ENCODE measurements at regions of chr1 and their contacts with region 1.

Region 1: GRCh38 chr1:200488375-200489165 is 78.7 kb upstream of the ZNF281 start:
- DNase-seq: peak in 8 of 9 experiments; percentile 8 to 66 (median 42)
- ATAC-seq: peak; percentile 56
- H3K4me3 ChIP-seq: no peak overlapping the region
- H3K4me3 Mint-ChIP-seq: no peak overlapping the region
- H3K27ac ChIP-seq: no peak overlapping the region
- H3K27ac Mint-ChIP-seq: no peak overlapping the region
- H3K4me1 ChIP-seq: no peaks in the 10 kb centered on the region
- H3K4me1 Mint-ChIP-seq: no peaks in the 10 kb centered on the region
- H3K27me3 ChIP-seq: no peaks in the 10 kb centered on the region
- H3K27me3 Mint-ChIP-seq: peaks cover 13% of the 10 kb centered on the region
- CTCF ChIP-seq: peak; percentile 75

Region 2: DNA sequence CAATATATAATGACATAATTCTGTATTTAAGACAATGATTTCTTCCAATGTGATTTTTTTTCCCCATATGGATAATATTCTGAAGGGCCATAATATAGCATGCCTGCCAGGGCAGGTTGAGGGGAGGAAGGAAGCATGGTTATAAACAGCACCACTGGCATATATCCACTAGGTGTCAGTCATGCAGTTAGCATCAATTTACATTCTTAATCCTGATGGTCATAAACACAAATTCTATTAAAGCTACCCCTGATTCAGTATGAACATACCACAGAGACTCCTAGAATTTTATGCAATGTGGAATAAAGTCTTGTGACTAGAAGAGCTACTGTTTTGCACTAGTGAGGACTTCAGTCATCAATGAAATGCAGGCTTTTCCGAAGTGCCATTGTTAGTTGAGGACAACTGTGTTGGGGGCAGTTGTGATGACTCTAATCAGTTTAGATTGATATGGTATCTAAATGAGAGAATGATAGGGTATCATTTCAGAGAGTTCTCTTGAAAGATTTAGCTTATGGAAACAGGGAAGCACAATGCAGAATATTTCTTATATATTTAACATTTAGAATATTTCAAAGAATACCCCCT is 803.8 kb before region 1 on chr1:
- CTCF ChIA-PET with region 1: interaction called, 6 read pairs
- POLR2A ChIA-PET with region 1: no interaction called
- intact Hi-C with region 1: loop called (anchors 1 kb)
- DNase-seq: peak in 3 of 9 experiments; percentile 6 to 57 (median 45)
- ATAC-seq: peak; percentile 61
- H3K4me3 ChIP-seq: no peak overlapping the region
- H3K4me3 Mint-ChIP-seq: no peak overlapping the region
- H3K27ac ChIP-seq: no peak overlapping the region
- H3K27ac Mint-ChIP-seq: no peak overlapping the region
- H3K4me1 ChIP-seq: no peaks in the 10 kb centered on the region
- H3K4me1 Mint-ChIP-seq: no peaks in the 10 kb centered on the region
- H3K27me3 ChIP-seq: no peaks in the 10 kb centered on the region
- H3K27me3 Mint-ChIP-seq: peaks cover 8% of the 10 kb centered on the region
- CTCF ChIP-seq: peak; percentile 68

Region 3: GRCh38 chr1:199774433-199775089 is 714.0 kb before region 1 on chr1:
- CTCF ChIA-PET with region 1: no interaction called
- POLR2A ChIA-PET with region 1: no interaction called
- intact Hi-C with region 1: loop called in 1 of 2 experiments (anchors 10 kb)
- DNase-seq: no peak
- ATAC-seq: no peak
- H3K4me3 ChIP-seq: no peak overlapping the region
- H3K4me3 Mint-ChIP-seq: no peak overlapping the region
- H3K27ac ChIP-seq: no peak overlapping the region
- H3K27ac Mint-ChIP-seq: no peak overlapping the region
- H3K4me1 ChIP-seq: no peaks in the 10 kb centered on the region
- H3K4me1 Mint-ChIP-seq: no peaks in the 10 kb centered on the region
- H3K27me3 ChIP-seq: no peaks in the 10 kb centered on the region
- H3K27me3 Mint-ChIP-seq: peaks cover 11% of the 10 kb centered on the region
- CTCF ChIP-seq: no peak

Region 4: DNA sequence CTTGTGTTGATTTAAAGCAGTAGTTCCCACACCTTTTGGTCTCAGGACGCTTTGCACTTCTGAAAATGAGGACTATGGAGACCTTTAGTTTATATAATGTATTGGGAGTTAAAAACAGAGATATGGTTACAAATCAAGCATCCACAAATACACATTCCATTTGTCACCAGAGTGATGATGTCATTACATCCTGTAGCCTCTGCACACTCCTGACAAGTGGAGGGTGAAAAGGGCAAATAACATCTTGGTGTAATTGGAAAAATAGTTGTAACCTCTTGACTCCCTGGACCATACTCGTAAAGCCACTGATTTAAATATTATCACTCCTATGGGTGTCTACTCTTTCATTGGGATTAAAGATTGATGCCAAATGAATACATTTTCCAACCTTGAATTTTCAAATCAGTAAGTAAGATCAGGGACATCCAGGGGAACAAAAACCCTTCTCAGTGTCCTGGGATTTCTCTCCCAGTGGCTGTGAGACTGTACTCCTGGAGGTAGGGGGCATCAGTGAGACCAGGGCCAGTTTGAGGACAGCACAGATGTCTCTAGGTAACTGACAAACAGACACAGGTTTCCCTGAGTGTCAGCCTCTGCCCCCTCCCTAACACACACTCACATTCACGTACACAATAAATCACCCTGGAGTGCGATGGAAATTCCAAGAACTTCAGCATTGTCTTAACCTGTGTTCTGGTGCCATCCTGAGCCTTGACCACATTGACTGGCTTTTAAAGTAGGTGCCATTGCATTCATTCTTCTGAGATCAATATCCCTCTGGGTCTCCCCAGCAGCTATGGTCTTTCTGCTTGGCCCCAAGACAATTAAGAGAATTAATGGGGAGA is 398.1 kb before region 1 on chr1:
- CTCF ChIA-PET with region 1: no interaction called
- POLR2A ChIA-PET with region 1: no interaction called
- intact Hi-C with region 1: loop called in 1 of 2 experiments (anchors 5 kb)
- DNase-seq: peak in 2 of 9 experiments; percentile 11 to 15
- ATAC-seq: no peak
- H3K4me3 ChIP-seq: no peak overlapping the region
- H3K4me3 Mint-ChIP-seq: no peak overlapping the region
- H3K27ac ChIP-seq: no peak overlapping the region
- H3K27ac Mint-ChIP-seq: no peak overlapping the region
- H3K4me1 ChIP-seq: no peaks in the 10 kb centered on the region
- H3K4me1 Mint-ChIP-seq: no peaks in the 10 kb centered on the region
- H3K27me3 ChIP-seq: no peaks in the 10 kb centered on the region
- H3K27me3 Mint-ChIP-seq: peaks cover 16% of the 10 kb centered on the region
- CTCF ChIP-seq: no peak

Region 5: DNA sequence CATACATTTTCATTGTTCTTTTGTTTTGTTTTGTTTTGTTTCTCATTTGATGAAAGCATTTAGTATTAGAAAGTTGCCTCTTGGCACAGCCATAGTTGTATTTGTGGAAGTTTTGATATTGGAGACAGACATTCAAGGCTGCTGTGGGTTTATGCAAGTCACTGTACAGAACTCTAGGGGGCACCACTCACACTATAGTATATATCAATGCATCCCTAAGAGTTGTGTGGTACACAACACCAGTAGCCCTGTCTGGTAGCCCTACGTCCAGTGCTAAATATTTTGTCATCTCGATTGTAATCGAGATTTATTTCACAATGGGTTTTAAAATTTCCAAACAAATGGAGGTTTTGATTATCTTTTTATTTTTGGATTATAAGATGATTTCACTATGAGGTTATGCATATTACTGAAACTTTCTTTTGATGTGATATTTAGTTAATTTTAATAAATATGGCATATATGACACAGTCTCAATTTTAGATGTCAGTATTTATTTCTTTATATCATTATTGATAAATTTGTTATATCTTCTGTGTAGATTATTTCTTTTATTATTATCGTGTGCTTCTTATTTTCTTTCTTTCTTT is 348.8 kb before region 1 on chr1:
- CTCF ChIA-PET with region 1: interaction called, 3 read pairs
- POLR2A ChIA-PET with region 1: no interaction called
- intact Hi-C with region 1: loop called (anchors 1 to 2 kb)
- DNase-seq: peak in 3 of 9 experiments; percentile 15 to 70 (median 67)
- ATAC-seq: peak; percentile 74
- H3K4me3 ChIP-seq: no peak overlapping the region
- H3K4me3 Mint-ChIP-seq: no peak overlapping the region
- H3K27ac ChIP-seq: no peak overlapping the region
- H3K27ac Mint-ChIP-seq: no peak overlapping the region
- H3K4me1 ChIP-seq: no peaks in the 10 kb centered on the region
- H3K4me1 Mint-ChIP-seq: no peaks in the 10 kb centered on the region
- H3K27me3 ChIP-seq: no peaks in the 10 kb centered on the region
- H3K27me3 Mint-ChIP-seq: no peaks in the 10 kb centered on the region
- CTCF ChIP-seq: peak; percentile 71

Region 6: GRCh38 chr1:200198247-200198646 is 290.3 kb before region 1 on chr1:
- CTCF ChIA-PET with region 1: no interaction called
- POLR2A ChIA-PET with region 1: no interaction called
- intact Hi-C with region 1: no loop called
- DNase-seq: no peak
- ATAC-seq: no peak
- H3K4me3 ChIP-seq: no peak overlapping the region
- H3K4me3 Mint-ChIP-seq: no peak overlapping the region
- H3K27ac ChIP-seq: no peak overlapping the region
- H3K27ac Mint-ChIP-seq: no peak overlapping the region
- H3K4me1 ChIP-seq: no peaks in the 10 kb centered on the region
- H3K4me1 Mint-ChIP-seq: no peaks in the 10 kb centered on the region
- H3K27me3 ChIP-seq: no peaks in the 10 kb centered on the region
- H3K27me3 Mint-ChIP-seq: peaks cover 7% of the 10 kb centered on the region
- CTCF ChIP-seq: no peak

Region 7: DNA sequence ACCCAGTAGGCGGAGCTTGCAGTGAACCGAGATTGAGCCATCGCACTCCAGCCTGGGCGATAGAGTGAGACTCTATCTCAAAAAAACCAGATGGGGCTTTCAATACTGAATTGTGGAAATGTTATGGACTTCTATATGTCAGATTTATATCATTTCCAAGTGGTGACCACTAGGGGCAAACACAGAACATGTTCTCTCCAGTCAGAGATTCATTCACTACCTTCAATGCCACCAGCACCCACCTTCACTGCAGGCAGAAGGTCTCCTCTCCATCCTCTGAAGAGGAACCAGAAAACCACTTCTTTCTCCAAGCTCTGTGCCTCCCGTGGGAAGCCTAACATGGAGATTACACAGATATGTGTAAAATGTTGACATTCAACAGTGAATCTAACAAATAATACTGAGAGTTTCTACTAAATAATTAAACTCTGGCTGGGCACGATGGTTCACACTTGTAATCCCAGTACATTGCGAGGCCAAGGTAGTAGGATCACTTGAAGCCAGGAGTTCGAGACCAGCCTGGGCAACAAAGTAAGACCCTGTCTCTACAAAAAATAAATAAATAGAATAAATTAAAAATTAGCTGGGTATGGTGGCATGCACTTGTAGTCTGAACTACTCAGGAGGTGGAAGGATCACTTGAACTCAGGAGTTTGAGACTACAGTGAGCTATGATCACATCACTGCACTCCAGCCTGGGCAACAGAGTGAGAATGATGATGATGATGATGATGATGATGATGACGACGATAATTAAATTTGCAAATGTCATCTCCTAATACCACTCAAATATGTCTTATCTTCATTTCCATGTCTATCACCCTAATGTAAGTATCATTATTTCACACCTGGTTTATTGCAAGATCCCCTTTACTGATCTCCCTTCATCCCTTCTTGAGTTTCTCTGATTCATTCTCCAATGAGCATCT is 229.9 kb before region 1 on chr1:
- CTCF ChIA-PET with region 1: no interaction called
- POLR2A ChIA-PET with region 1: no interaction called
- intact Hi-C with region 1: loop called in 1 of 2 experiments (anchors 5 kb)
- DNase-seq: peak in 3 of 9 experiments; percentile 7 to 44 (median 37)
- ATAC-seq: no peak
- H3K4me3 ChIP-seq: no peak overlapping the region
- H3K4me3 Mint-ChIP-seq: no peak overlapping the region
- H3K27ac ChIP-seq: no peak overlapping the region
- H3K27ac Mint-ChIP-seq: no peak overlapping the region
- H3K4me1 ChIP-seq: no peaks in the 10 kb centered on the region
- H3K4me1 Mint-ChIP-seq: no peaks in the 10 kb centered on the region
- H3K27me3 ChIP-seq: no peaks in the 10 kb centered on the region
- H3K27me3 Mint-ChIP-seq: no peaks in the 10 kb centered on the region
- CTCF ChIP-seq: peak; percentile 35

Region 8: GRCh38 chr1:200279810-200280411 is 208.7 kb before region 1 on chr1:
- CTCF ChIA-PET with region 1: interaction called, 7 read pairs
- POLR2A ChIA-PET with region 1: no interaction called
- intact Hi-C with region 1: loop called (anchors 2 to 5 kb)
- DNase-seq: peak in 4 of 9 experiments; percentile 19 to 49 (median 34)
- ATAC-seq: no peak
- H3K4me3 ChIP-seq: no peak overlapping the region
- H3K4me3 Mint-ChIP-seq: no peak overlapping the region
- H3K27ac ChIP-seq: no peak overlapping the region
- H3K27ac Mint-ChIP-seq: no peak overlapping the region
- H3K4me1 ChIP-seq: no peaks in the 10 kb centered on the region
- H3K4me1 Mint-ChIP-seq: no peaks in the 10 kb centered on the region
- H3K27me3 ChIP-seq: no peaks in the 10 kb centered on the region
- H3K27me3 Mint-ChIP-seq: no peaks in the 10 kb centered on the region
- CTCF ChIP-seq: peak; percentile 58

Region 9: DNA sequence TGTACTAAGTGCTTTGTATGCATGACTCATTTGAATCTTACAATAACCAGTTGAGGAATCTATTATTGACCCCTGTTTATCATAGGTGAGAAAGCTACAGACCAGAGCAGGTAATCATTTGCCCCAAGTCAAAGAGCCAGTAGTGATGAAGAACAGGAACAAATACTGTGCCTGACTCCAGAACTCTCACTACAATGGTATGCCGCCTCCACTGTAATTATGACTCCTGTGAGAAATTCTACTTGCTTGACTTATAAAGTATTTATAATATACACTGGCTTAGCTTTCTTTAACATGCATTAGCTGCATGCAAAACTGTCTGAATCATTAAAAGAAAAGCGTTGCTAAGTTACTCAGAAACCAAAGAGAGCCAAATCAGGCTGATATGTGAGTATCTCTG is 171.3 kb before region 1 on chr1:
- CTCF ChIA-PET with region 1: no interaction called
- POLR2A ChIA-PET with region 1: no interaction called
- intact Hi-C with region 1: no loop called
- DNase-seq: no peak
- ATAC-seq: no peak
- H3K4me3 ChIP-seq: no peak overlapping the region
- H3K4me3 Mint-ChIP-seq: no peak overlapping the region
- H3K27ac ChIP-seq: no peak overlapping the region
- H3K27ac Mint-ChIP-seq: no peak overlapping the region
- H3K4me1 ChIP-seq: no peaks in the 10 kb centered on the region
- H3K4me1 Mint-ChIP-seq: no peaks in the 10 kb centered on the region
- H3K27me3 ChIP-seq: peaks cover 0 to 2% of the 10 kb centered on the region in 2 experiments
- H3K27me3 Mint-ChIP-seq: peaks cover 17% of the 10 kb centered on the region
- CTCF ChIP-seq: no peak

Region 10: DNA sequence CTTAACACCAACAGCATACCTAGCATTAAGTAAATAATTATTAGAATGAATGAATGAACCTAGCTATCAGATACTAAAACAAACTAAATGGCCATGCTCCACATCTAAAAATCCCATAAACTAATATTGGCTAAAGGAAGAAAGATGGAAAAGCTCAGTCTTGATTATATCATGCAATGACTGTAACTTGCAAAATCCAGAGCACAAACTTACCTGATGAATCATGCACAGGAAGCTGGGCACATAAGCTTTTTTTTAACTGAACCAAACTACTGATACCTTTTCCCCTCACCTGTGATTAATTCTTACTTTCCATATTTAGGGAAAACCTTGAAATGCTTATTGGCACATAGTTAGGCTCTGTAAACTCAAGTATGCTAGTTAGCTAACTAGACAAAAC is 61.8 kb after region 1 on chr1:
- CTCF ChIA-PET with region 1: no interaction called
- POLR2A ChIA-PET with region 1: no interaction called
- intact Hi-C with region 1: no loop called
- DNase-seq: no peak
- ATAC-seq: no peak
- H3K4me3 ChIP-seq: no peak overlapping the region
- H3K4me3 Mint-ChIP-seq: no peak overlapping the region
- H3K27ac ChIP-seq: no peak overlapping the region
- H3K27ac Mint-ChIP-seq: no peak overlapping the region
- H3K4me1 ChIP-seq: no peaks in the 10 kb centered on the region
- H3K4me1 Mint-ChIP-seq: peaks cover 11% of the 10 kb centered on the region
- H3K27me3 ChIP-seq: no peaks in the 10 kb centered on the region
- H3K27me3 Mint-ChIP-seq: no peaks in the 10 kb centered on the region
- CTCF ChIP-seq: no peak

Measured in CD8-positive, alpha-beta T cell (primary cell).